Mammary epithelial cell (primary cell): ENCODE measurements at regions of chr9 and their contacts with region 1.

Region 1: DNA sequence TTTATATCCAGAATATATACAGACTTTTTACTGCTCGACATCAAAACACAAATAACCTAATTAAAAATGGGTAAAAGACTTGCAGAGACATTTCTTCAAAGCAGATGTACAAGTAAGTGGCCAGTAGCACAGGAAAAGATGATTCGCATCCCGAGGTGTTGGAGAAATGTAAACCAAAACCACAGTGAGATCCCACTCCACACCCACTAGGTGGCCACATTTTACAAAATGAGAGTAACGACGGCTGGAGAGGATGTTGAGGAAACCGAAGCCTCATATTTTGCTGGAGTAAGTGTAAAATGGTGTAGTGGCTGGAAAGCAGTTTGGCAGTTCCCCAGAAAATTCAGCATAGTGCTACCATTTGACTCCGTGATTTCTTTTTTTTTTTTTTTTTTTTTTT is 21.2 kb upstream of the GBGT1 start:
- DNase-seq: peak; percentile 75
- H3K4me3 ChIP-seq: no peak overlapping the region
- H3K27ac ChIP-seq: no peak overlapping the region
- H3K4me1 ChIP-seq: no peaks in the 10 kb centered on the region
- H3K27me3 ChIP-seq: peaks cover 2% of the 10 kb centered on the region
- CTCF ChIP-seq: peak; percentile 63 to 76

Region 2: DNA sequence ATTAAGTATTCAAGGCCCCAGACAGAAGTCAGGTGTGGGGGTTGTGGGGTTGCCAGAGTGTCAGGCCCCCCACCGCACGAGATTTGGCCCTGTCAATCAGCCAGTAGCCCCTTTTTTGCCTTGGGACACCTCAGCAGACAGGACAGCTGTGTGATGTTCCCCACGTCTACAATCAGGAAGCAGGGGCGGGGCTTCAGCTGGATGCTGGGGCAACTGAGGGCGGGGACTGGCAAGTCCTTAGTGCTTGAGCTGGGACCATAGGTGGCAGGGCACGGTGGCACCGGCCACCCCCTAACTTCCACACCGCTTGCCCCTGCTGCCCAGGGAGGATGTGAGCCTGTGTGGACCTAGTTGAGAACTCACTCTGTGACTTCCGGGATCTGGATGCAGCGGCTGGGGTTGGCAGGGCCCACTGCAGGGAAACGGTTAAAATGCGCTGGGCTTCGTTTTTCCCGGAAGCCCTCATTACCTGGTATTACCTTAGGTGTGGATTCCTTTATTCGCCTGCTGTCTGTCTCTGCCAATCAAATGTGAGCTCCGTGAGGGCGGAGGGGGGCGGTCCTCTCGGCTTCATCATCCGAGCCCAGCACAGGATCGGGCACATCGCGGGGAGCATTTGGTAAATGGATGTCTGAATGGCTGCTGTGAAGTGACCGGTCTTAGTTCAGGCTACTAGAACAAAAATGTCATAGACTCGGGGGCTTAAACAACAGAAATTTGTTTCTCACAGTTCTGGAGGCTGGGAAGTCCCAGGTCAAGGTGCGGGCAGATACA is 161.7 kb before region 1 on chr9:
- CTCF ChIA-PET with region 1: no interaction called
- dilution Hi-C with region 1: no loop called
- in situ Hi-C with region 1: no loop called
- intact Hi-C with region 1: loop called (anchors 2 kb)
- DNase-seq: no peak
- H3K4me3 ChIP-seq: no peak overlapping the region
- H3K27ac ChIP-seq: no peak overlapping the region
- H3K4me1 ChIP-seq: no peaks in the 10 kb centered on the region
- H3K27me3 ChIP-seq: no peaks in the 10 kb centered on the region
- CTCF ChIP-seq: no peak

Region 3: DNA sequence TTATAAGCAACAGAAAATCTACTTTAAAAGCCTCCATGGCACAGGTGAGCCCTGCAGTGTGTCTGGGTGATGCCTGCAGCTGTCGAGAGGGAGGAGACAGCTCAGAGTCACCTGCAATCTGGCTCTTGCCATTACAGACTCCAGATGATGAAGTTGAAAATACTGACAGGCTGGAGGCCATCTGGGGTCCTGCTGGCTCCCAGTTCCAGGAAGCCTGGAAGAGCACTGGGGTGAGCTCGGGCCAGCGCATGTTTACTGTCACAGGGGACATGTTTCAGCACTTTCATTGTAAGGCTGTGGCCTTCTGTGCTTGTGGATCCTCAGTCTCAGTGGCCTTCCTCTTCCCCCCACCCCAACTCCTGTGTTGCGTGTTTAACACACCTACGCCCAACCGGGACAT is 94.8 kb before region 1 on chr9:
- CTCF ChIA-PET with region 1: interaction called, 11 read pairs
- dilution Hi-C with region 1: no loop called
- in situ Hi-C with region 1: no loop called
- intact Hi-C with region 1: no loop called
- DNase-seq: no peak
- H3K4me3 ChIP-seq: no peak overlapping the region
- H3K27ac ChIP-seq: no peak overlapping the region
- H3K4me1 ChIP-seq: no peaks in the 10 kb centered on the region
- H3K27me3 ChIP-seq: no peaks in the 10 kb centered on the region
- CTCF ChIP-seq: no peak

Region 4: GRCh38 chr9:133121198-133121939 is 63.6 kb before region 1 on chr9 and contains the start of gene RALGDS:
- CTCF ChIA-PET with region 1: no interaction called
- dilution Hi-C with region 1: no loop called
- in situ Hi-C with region 1: no loop called
- intact Hi-C with region 1: no loop called
- DNase-seq: peak; percentile 82
- H3K4me3 ChIP-seq: peak within 1 kb of the TSS; percentile 56 to 83 (median 62)
- H3K27ac ChIP-seq: peak within 1 kb of the TSS; percentile 37
- H3K4me1 ChIP-seq: peaks cover 11% of the 10 kb centered on the region
- H3K27me3 ChIP-seq: no peaks in the 10 kb centered on the region
- CTCF ChIP-seq: no peak
- total RNA-seq, gene RALGDS: 15.2 to 19.9 TPM

Region 5: GRCh38 chr9:133275105-133276000 is 90.4 kb after region 1 on chr9 and contains the start of gene ABO:
- CTCF ChIA-PET with region 1: interaction called, 3 read pairs
- dilution Hi-C with region 1: loop called (anchors 5 kb)
- in situ Hi-C with region 1: no loop called
- intact Hi-C with region 1: no loop called
- DNase-seq: no peak
- H3K4me3 ChIP-seq: peak within 1 kb of the TSS in 1 of 3 experiments; percentile 6
- H3K27ac ChIP-seq: no peak within 1 kb of the TSS
- H3K4me1 ChIP-seq: peaks cover 6% of the 10 kb centered on the region
- H3K27me3 ChIP-seq: peaks cover 26% of the 10 kb centered on the region
- CTCF ChIP-seq: no peak
- total RNA-seq, gene ABO: not detected

Region 6: GRCh38 chr9:133335878-133336811 is 151.2 kb after region 1 on chr9 and contains the start of gene SURF6:
- CTCF ChIA-PET with region 1: no interaction called
- dilution Hi-C with region 1: no loop called
- in situ Hi-C with region 1: loop called in 1 of 2 experiments (anchors 10 kb)
- intact Hi-C with region 1: no loop called
- DNase-seq: peak; percentile 91
- H3K4me3 ChIP-seq: peak within 1 kb of the TSS; percentile 77 to 88 (median 81)
- H3K27ac ChIP-seq: peak within 1 kb of the TSS; percentile 58
- H3K4me1 ChIP-seq: peaks cover 18% of the 10 kb centered on the region
- H3K27me3 ChIP-seq: no peaks in the 10 kb centered on the region
- CTCF ChIP-seq: no peak
- total RNA-seq, gene SURF6: 6.8 to 27.2 TPM

Region 7: GRCh38 chr9:133485361-133486260 is 300.6 kb after region 1 on chr9:
- CTCF ChIA-PET with region 1: no interaction called
- dilution Hi-C with region 1: no loop called
- in situ Hi-C with region 1: loop called (anchors 5 to 10 kb)
- intact Hi-C with region 1: loop called (anchors 1 kb)
- DNase-seq: no peak
- H3K4me3 ChIP-seq: no peak overlapping the region
- H3K27ac ChIP-seq: no peak overlapping the region
- H3K4me1 ChIP-seq: no peaks in the 10 kb centered on the region
- H3K27me3 ChIP-seq: no peaks in the 10 kb centered on the region
- CTCF ChIP-seq: no peak